AG04449 (cell line): ENCODE measurements at regions of chr1 and their contacts with region 1.

Region 1: GRCh38 chr1:54996359-54996868 is 2.3 kb upstream of the BSND start:
- DNase-seq: no peak
- H3K4me3 ChIP-seq: no peak overlapping the region
- CTCF ChIP-seq: peak; percentile 87

Region 2: DNA sequence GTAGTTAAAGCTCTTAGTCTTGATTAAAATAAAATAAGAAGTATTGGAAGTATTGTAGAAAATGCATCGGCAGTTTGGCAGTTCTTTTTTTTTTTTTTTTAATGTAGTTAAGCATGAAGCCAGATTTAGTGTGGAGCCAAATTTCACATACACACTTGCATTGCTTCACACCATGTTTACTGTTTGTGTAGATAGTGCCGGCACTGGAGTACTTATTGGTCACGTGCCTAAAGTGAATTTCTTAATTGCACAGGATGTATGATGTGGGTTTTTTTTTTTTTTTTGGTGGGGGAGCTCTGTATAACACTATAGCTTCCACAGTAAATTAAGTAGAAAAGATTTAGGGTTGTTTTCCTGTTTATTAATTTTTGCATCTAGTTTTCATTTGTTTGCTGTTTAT is 37.2 kb before region 1 on chr1:
- CTCF ChIA-PET with region 1: interaction called, 522 read pairs
- POLR2A ChIA-PET with region 1: no interaction called
- DNase-seq: no peak
- H3K4me3 ChIP-seq: no peak overlapping the region
- CTCF ChIP-seq: no peak

Region 3: GRCh38 chr1:54965624-54966340 is 30.6 kb before region 1 on chr1:
- CTCF ChIA-PET with region 1: interaction called, 25 read pairs
- POLR2A ChIA-PET with region 1: no interaction called
- DNase-seq: no peak
- H3K4me3 ChIP-seq: no peak overlapping the region
- CTCF ChIP-seq: no peak

Region 4: GRCh38 chr1:54973205-54973921 is 23.1 kb before region 1 on chr1:
- CTCF ChIA-PET with region 1: interaction called, 29 read pairs
- POLR2A ChIA-PET with region 1: no interaction called
- DNase-seq: no peak
- H3K4me3 ChIP-seq: no peak overlapping the region
- CTCF ChIP-seq: peak; percentile 53

Region 5: GRCh38 chr1:55007625-55008024 is 11.2 kb after region 1 on chr1:
- CTCF ChIA-PET with region 1: interaction called, 70 read pairs
- POLR2A ChIA-PET with region 1: no interaction called
- DNase-seq: peak; percentile 56
- H3K4me3 ChIP-seq: no peak overlapping the region
- CTCF ChIP-seq: no peak

Region 6: DNA sequence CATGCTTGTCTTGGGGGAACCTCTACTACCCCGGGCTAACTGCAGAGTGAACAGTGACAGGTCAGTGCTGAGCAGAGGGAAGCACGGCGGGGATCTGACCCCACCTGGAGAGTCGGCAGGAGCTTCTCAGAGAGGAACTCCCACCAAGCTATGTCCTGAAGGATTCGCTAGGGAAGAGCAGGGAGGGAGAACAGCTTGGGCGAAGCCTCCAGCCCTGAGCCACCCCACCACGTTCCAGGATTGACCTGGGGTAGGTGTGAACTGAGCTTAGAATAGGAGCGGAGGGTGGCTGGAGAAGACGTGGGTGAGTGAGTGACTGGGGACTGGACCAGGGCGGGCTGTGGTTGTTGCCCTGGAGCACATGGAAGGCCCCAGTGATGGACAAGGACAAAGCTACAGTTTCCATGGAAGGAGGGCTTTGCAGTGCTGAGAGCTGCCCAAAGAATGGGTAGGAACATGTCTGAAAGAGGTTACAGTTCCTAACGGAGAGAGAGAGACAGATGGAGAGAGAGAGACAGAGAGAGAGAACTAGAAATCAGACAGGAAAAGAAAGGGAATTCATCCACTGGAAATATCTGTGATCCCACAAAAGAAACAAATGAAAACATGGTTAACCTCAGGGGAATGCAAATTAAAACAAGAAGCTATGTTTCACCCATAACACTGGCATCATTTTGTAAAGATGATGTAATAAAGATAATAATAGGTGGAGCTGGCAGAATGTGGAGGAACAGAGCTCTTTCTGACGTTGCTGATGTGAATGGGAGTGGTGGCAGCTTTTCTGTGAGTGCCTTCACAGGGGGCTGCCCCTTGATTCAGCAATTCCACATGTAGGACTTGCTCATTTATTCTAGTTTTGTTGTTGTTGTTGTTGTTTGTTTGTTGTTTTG is 19.6 kb after region 1 on chr1:
- CTCF ChIA-PET with region 1: interaction called, 14 read pairs
- POLR2A ChIA-PET with region 1: no interaction called
- DNase-seq: no peak
- H3K4me3 ChIP-seq: no peak overlapping the region
- CTCF ChIP-seq: no peak

Region 7: GRCh38 chr1:55362558-55362957 is 366.1 kb after region 1 on chr1:
- CTCF ChIA-PET with region 1: no interaction called
- POLR2A ChIA-PET with region 1: no interaction called
- DNase-seq: peak; percentile 34
- H3K4me3 ChIP-seq: no peak overlapping the region
- CTCF ChIP-seq: no peak